PC-9 (cell line): ENCODE measurements at regions of chr14 and their contacts with region 1.

Region 1: GRCh38 chr14:54108481-54109471 is 152.2 kb upstream of the BMP4 start:
- DNase-seq: peak; percentile 45 to 75
- H3K4me3 ChIP-seq: no peak overlapping the region
- H3K27ac ChIP-seq: peak overlapping the region; percentile 53
- H3K4me1 ChIP-seq: peaks cover 57% of the 10 kb centered on the region
- H3K27me3 ChIP-seq: no peaks in the 10 kb centered on the region
- CTCF ChIP-seq: no peak

Region 2: GRCh38 chr14:53715193-53715721 is 393.5 kb before region 1 on chr14:
- CTCF ChIA-PET with region 1: no interaction called
- POLR2A ChIA-PET with region 1: interaction called, 3 read pairs
- intact Hi-C with region 1: loop called (anchors 10 kb)
- DNase-seq: peak; percentile 27 to 68
- H3K4me3 ChIP-seq: peak overlapping the region; percentile 3; the same call in 1 of the 2 replicates
- H3K27ac ChIP-seq: no peak overlapping the region
- H3K4me1 ChIP-seq: peaks cover 9% of the 10 kb centered on the region
- H3K27me3 ChIP-seq: no peaks in the 10 kb centered on the region
- CTCF ChIP-seq: no peak

Region 3: DNA sequence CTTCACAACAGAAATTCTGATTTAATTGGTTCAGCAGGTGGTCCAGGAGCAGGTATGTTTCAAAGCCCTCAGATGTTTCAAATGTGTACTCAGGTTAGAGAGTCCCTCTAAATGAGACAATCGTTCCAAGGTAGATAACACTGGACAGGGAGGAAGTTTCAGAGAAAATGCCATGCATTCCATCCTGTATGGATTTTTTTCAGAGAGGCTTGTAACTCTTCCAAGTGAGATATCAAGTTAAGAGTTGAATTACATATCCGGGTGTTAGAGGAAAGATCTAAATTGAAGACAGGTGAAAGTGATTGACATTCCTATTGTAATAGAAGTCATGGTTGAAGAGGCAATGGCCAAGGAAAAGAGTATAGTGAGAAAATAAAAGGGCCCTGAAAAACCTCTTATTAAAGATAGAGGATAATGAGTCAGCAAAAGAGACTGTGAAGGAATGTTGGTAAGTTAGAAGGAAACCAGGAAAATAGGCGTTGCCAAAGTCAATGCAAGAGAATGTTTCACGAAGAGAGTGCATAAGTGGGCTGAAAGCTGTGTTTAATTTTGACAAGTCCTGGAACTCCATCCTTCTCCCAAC is 258.0 kb before region 1 on chr14:
- CTCF ChIA-PET with region 1: no interaction called
- POLR2A ChIA-PET with region 1: interaction called, 5 read pairs
- intact Hi-C with region 1: loop called (anchors 1 kb)
- DNase-seq: peak; percentile 47 to 96
- H3K4me3 ChIP-seq: peak overlapping the region; percentile 26
- H3K27ac ChIP-seq: peak overlapping the region; percentile 88
- H3K4me1 ChIP-seq: peaks cover 38% of the 10 kb centered on the region
- H3K27me3 ChIP-seq: no peaks in the 10 kb centered on the region
- CTCF ChIP-seq: no peak

Region 4: DNA sequence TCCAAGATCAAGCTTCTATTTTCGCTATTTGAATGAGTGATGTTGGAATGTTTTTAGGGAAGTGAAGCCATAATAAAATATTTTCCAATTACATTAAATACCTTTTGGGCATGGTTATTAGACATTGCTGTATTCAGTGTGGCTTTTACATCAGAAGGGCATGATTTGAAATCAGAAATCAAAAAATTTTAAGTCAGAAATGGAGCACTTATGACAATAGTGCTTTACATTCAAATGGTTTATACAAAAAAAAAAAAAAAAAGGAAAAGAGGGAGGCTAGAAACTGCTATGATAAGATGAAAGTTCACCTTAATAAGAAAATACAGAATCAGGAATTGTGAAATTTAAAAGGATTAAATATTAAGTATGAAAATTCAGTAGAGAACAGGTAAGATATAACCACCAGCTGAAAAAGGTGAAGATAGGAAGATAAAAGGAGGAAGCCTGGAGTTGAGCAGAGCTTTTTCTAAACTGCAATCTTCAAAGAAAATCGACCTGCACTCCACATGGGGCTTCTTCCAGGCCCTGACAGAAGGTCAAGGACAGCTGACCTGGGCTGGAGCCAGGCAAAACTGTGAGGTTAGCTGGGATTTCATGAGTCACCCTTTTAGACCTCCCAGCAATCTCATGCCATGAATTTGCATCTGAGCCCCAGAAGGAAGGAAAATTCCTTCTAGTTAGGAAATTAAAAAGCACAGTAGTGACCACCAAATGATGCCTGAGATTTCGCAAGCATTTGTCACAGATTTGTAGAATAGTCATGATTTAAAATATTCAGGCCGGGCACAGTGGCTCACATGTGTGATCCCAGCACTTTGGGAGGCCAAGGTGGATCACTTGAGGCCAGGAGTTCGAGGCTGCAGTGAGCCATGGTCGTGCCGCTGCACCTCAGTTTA is 128.8 kb before region 1 on chr14:
- CTCF ChIA-PET with region 1: no interaction called
- POLR2A ChIA-PET with region 1: interaction called, 5 read pairs
- intact Hi-C with region 1: loop called (anchors 1 kb)
- DNase-seq: peak; percentile 40 to 44
- H3K4me3 ChIP-seq: no peak overlapping the region
- H3K27ac ChIP-seq: no peak overlapping the region
- H3K4me1 ChIP-seq: no peaks in the 10 kb centered on the region
- H3K27me3 ChIP-seq: no peaks in the 10 kb centered on the region
- CTCF ChIP-seq: no peak

Region 5: DNA sequence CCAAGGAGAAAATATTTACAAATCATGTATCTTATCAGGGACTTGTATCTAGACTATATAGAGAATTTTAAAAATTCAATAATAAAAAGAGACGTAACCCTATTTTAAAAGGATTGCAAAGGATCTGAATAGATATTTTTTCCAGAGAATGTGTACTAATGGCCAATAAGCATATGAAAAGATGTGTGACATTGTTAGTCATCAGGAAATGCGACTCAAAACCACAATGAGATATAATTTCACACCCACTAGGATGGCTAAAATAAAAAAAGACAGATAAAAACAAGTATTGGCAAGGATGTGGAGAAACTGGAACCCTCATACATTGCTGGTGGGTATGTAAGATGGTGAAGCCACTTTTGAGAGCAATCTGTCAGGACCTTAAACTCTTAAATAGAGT is 10.2 kb before region 1 on chr14:
- CTCF ChIA-PET with region 1: no interaction called
- POLR2A ChIA-PET with region 1: no interaction called
- intact Hi-C with region 1: no loop called
- DNase-seq: no peak
- H3K4me3 ChIP-seq: no peak overlapping the region
- H3K27ac ChIP-seq: no peak overlapping the region
- H3K4me1 ChIP-seq: no peaks in the 10 kb centered on the region
- H3K27me3 ChIP-seq: no peaks in the 10 kb centered on the region
- CTCF ChIP-seq: no peak

Region 6: GRCh38 chr14:54169254-54169924 is 60.6 kb after region 1 on chr14:
- CTCF ChIA-PET with region 1: no interaction called
- POLR2A ChIA-PET with region 1: interaction called, 4 read pairs
- intact Hi-C with region 1: loop called (anchors 1 kb)
- DNase-seq: peak; percentile 56 to 88
- H3K4me3 ChIP-seq: no peak overlapping the region
- H3K27ac ChIP-seq: peak overlapping the region; percentile 78
- H3K4me1 ChIP-seq: peaks cover 29% of the 10 kb centered on the region
- H3K27me3 ChIP-seq: no peaks in the 10 kb centered on the region
- CTCF ChIP-seq: no peak

Region 7: GRCh38 chr14:54312140-54312801 is 203.5 kb after region 1 on chr14:
- CTCF ChIA-PET with region 1: no interaction called
- POLR2A ChIA-PET with region 1: interaction called, 11 read pairs
- intact Hi-C with region 1: loop called (anchors 2 kb)
- DNase-seq: peak; percentile 91 to 97
- H3K4me3 ChIP-seq: no peak overlapping the region; the same call in 1 of the 2 replicates
- H3K27ac ChIP-seq: peak overlapping the region; percentile 75
- H3K4me1 ChIP-seq: peaks cover 35% of the 10 kb centered on the region
- H3K27me3 ChIP-seq: no peaks in the 10 kb centered on the region
- CTCF ChIP-seq: no peak